Activated T-helper 2 cell treated with anti-CD3 and anti-CD28 coated beads, Interferon-gamma antibody, Interleukin-2, Interleukin-4, amounts not matched to agents 10 μg/mL and 5 μg/mL and 100 μg/mL, durations not matched to agents 14 hours and 24 hours and 36 hours (primary cell): ENCODE measurements at regions of chr21 and their contacts with region 1.

Region 1: DNA sequence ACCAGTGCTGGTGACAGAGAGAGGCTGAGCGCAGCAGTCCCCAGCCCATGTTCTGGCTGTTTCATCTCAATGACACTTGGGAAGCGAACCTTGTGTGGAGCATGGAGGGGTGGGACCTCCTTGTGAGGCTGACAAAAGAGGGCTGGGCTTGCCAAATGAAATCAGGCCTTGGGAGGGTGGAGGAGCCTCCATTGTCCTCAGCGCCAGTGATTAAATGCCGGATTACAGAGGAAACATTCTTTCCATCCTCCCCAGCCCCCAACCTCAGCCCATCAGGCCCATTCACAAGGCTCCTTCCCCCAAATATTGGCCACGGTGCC is 63.3 kb upstream of the PAXBP1 start:
- DNase-seq: no peak
- H3K4me3 Mint-ChIP-seq: no peak overlapping the region
- H3K27ac Mint-ChIP-seq: no peak overlapping the region
- H3K4me1 Mint-ChIP-seq: no peaks in the 10 kb centered on the region
- H3K27me3 Mint-ChIP-seq: peaks cover 25% of the 10 kb centered on the region

Region 2: DNA sequence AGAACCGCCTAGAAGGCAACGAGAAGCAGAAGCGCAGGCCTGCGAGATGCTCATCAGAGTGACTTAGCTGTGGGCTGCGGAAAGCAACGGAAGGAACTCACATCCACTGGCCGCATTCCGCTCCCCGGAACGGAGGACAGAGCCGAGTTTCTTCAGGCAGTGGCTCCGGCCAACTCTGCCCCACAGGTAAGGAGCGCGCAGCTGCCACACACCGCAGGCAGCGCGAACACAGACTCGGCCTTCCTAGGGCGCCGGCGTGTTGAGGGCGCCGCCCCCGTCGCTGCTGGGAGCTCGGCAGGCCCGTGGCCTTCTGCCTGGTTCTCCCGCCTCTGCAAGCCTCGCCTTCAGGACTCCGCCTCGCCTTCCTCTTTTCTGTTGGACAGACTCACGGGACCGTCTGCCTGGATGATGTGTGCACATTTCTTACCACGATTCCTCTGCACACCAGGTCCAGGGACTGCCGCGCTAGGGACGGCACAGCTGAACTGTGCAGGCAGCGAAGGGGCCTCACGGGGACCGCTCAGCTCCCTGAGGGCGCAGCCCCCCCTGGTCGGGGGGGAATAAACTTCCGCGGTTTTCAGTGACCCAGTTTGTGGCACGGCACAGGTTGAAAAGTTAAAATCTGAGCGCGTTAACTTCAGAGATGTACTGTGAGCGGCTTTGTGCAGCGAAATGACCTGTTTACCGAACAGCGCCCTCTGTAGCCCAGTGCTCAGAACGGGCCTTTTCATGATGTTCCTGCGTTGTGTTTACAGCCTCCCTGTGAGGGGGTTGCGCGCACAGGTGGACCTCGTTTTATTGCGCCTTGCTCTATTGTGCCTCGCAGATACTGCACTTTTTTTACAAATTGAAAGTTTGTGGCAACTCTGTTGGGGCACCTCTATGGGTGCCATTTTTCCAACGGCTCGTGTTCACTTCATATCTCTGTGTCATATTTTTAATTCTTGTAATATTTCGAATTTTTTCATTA is 265.3 kb before region 1 on chr21:
- intact Hi-C with region 1: no loop called
- DNase-seq: peak; percentile 70
- H3K4me3 Mint-ChIP-seq: peak overlapping the region; percentile 86
- H3K27ac Mint-ChIP-seq: peak overlapping the region; percentile 19
- H3K4me1 Mint-ChIP-seq: peaks cover 16% of the 10 kb centered on the region
- H3K27me3 Mint-ChIP-seq: peaks cover 10% of the 10 kb centered on the region

Region 3: DNA sequence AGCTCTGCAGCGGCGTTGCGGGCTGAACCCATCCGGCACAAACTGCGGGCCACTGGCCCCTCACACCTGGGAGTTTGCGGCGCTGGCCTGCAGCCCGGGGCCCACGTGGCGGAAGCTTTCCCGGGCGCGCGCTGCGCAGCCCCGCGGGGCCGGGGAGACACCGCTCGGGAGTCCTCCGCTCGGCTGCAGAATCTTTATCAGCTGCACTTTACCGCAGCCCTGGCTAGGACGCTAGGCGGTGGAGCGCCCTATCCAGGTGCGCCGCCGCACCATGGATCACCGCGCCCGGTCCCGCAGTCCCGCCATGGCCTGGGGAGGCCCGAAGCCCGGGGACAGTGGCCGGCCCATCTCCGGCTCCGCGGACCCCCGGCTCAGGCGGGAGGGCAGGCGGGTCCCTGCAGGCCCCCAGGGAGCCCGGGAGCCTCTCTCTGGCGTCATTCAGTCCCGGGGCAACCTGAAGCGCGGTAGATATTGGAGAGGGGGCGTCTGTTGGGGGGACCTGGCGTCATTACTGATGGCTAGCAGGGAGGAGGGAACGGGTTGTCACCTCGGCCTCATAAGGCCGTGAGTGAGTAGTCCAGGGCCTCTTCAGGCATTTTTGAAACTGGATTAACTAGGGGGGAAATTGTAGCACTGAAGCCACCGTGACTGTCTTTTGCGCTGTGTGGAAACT is 185.1 kb after region 1 on chr21:
- intact Hi-C with region 1: loop called (anchors 5 kb)
- DNase-seq: no peak
- H3K4me3 Mint-ChIP-seq: no peak overlapping the region
- H3K27ac Mint-ChIP-seq: no peak overlapping the region
- H3K4me1 Mint-ChIP-seq: peaks cover 18% of the 10 kb centered on the region
- H3K27me3 Mint-ChIP-seq: peaks cover 85% of the 10 kb centered on the region

Region 4: DNA sequence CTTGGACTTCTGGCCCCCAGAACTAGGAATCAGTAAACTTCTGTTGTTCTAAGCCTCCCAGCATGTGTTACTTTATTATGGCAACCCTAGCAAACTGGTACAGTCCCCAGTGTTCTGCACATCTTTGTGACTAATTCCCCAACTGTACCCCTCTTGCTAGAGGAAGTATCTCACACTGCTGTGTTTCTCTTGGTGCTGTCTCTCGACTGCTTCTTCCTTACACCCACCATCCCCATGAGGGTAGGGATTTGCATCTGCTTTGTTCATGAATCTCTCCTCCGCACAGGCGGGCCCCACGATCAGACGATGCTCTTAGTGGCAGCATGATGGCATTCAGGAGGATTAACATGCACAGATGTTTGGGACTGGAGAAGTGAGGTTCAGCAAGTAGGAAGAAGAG is 1880.6 kb after region 1 on chr21:
- intact Hi-C with region 1: no loop called
- DNase-seq: no peak
- H3K4me3 Mint-ChIP-seq: no peak overlapping the region
- H3K27ac Mint-ChIP-seq: no peak overlapping the region
- H3K4me1 Mint-ChIP-seq: peaks cover 14% of the 10 kb centered on the region
- H3K27me3 Mint-ChIP-seq: peaks cover 21% of the 10 kb centered on the region